ENCODE measurements at regions of chr11 and their contacts with region 1.

Region 1: DNA sequence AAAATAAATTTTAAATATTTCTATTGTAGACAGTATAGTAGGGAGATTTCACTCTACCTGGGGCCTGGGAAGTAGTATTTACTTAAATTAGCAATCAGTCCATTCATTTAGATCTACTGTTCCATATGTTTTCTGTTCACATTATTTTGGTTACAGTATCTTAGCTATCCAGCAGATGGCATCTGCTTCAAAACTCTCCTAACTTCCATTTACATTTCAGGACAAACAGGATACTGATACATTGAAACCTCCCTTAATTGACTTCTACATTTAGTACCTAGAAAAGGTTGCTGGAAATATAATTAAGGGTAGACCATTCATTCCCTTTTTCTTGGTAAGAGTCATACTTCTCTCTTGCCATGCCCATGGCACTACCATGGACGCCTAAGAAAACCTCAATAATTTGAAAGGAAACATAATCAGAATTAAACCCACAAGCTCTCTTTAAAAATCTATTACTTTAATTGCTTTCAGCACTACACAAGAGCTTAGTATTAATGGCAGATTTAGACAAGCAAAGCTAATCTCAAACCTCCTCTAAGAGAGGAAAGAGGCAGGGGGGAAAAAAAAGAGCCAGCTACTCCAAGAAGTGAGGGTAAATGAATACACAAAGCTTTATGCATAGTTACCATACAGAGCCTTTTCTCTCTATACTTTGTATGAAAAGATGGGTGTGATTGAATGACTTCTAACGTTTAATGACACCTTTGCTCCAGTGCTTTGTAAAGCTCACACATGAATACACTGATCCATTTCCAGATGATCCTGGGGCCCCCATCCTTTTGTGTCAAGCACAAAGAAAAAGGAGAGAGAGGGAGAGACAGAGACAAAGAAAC is 131.2 kb upstream of the MTMR2 start:
- DNase-seq: no peak
- ATAC-seq: peak; percentile 58 to 62

Region 2: DNA sequence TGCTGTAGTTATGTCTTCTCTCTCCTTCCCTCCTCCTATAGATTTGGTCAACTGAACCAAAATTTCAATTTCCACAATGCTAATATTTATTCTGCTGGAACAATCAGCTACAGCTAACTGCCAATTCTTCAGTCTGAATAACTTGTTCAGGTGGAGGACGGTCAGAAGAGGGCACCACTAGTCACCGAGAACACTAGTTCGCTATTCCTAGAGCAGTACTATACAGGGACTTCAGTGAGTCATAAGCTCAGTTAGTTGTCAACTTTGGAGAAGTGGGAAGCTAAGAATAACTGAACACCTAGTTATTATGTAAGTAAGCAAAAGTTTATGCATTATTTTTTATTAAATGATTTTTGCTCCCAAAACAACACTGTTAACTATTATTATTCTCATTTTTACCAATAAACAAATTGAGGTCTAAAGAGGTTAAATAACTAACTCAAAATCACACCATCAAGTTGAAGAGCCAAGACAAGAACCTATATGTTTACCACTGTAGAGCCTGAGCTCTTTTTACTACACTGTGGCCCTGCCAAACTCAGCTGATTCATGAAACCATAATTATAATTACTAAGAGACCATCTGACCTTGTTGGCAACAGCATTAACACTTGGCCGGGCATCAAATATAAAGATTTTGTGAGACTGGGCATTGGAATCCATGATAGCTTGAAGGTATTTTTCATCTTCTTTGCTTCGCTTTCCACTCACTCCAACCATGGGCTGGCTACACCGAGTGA is 205.8 kb before region 1 on chr11:
- intact Hi-C with region 1: loop called in 1 of 2 experiments (anchors 5 kb)
- DNase-seq: peak; percentile 38
- ATAC-seq: peak; percentile 93 to 96